Heart left ventricle (tissue), 16 donors: ENCODE measurements at regions of chr16 and their contacts with region 1.

Region 1: DNA sequence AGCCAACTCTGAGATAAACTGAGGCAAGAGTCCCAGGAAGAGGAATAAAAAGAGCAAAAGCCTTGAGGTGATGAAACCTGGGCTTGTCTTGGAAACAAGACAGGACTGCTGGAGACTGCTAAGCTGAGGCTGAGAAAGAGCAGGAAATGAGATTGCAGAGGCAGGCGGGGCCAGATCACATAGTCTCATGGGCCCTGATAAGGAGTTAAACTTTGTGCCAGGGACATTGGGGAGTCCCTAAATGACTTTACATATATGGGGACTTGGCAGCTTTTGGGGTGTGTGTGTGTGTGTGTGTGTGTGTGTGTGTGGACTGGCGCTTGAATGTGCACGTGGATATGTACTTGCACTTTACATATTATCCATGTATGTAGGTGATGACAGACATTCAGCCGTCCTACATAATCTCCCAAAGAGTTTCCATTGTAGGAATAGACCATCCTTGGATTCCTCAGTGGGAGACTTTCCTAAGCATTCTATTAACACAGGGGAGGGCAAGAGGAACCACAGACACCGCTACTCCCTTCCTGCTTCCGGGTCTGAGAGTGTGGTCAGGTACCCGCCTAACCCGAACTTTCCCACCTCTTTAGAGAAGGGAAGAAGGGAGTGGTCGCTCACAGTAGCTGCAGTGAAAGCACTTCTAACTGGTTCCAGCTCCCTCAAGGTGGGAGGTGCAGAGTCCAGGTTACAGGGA is 123.1 kb downstream of the LYRM1 start:
- DNase-seq: peak in 4 of 5 donors; percentile 26 to 64 (median 48)
- ATAC-seq: peak; percentile 58 to 96 (median 94)
- H3K4me3 ChIP-seq: no peak overlapping the region
- H3K27ac ChIP-seq: peak overlapping the region in 3 of 12 donors; percentile 8 to 49 (median 26)
- H3K4me1 ChIP-seq: peaks cover 0 to 10% (median 0%) of the 10 kb centered on the region in 12 donors
- H3K27me3 ChIP-seq: no peaks in the 10 kb centered on the region
- CTCF ChIP-seq: no peak
- POLR2A ChIP-seq: no peak

Region 2: GRCh38 chr16:21069986-21070385 is 46.3 kb after region 1 on chr16:
- intact Hi-C with region 1: loop called in 1 of 10 experiments (anchors 5 kb)
- DNase-seq: no peak
- ATAC-seq: no peak
- H3K4me3 ChIP-seq: no peak overlapping the region
- H3K27ac ChIP-seq: no peak overlapping the region
- H3K4me1 ChIP-seq: peaks cover 0 to 13% (median under 1%) of the 10 kb centered on the region in 12 donors
- H3K27me3 ChIP-seq: no peaks in the 10 kb centered on the region
- CTCF ChIP-seq: no peak
- POLR2A ChIP-seq: no peak